ENCODE measurements at regions of chr15 and their contacts with region 1.

Region 1: DNA sequence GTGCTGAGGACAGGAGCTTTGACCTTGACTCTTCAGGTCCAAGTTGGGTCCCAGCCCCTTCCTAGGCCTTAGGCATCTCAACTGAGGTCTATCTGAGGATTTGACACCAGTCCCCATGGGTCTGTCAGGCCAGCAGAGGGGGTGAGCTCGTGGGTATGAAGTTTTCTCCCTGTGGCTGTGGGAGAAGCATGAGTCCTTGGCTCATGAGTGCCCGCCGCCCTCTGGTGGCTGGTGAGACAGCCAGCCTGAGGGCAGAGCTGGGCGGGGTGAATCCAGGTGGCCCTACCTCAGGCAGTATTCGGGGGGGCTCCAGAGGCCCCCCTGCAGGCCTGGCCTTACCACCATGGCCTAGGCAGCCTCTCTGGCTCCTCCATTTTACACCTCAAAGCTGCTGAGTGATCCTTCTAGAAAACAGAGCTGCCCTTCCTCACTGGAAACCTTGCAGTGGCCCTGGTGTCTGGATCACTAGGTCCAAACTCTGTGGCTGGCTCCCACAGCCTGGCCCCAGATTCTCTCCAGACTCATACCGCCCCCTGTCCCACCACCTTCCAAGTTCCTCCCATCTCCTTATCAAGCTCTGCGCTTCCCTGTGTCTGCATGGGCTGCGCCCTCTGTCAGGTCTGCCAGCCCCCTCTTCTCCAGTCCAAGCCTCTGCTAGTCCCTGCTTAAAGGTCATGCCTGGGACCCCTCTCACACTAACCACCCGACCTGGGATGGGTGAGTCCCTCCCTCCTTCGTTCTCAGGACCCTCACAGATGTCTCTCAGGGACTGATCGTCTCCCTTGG is 16.1 kb downstream of the SH2D7 start:
- DNase-seq: peak; percentile 69 to 92 (median 85)
- ATAC-seq: peak; percentile 79
- H3K4me3 ChIP-seq: no peak overlapping the region
- H3K4me3 Mint-ChIP-seq: no peak overlapping the region
- H3K27ac ChIP-seq: no peak overlapping the region
- H3K27ac Mint-ChIP-seq: no peak overlapping the region
- H3K4me1 ChIP-seq: peaks cover 34% of the 10 kb centered on the region
- H3K4me1 Mint-ChIP-seq: peaks cover 35% of the 10 kb centered on the region
- H3K27me3 ChIP-seq: no peaks in the 10 kb centered on the region
- H3K27me3 Mint-ChIP-seq: no peaks in the 10 kb centered on the region
- CTCF ChIP-seq: peak; percentile 80

Region 2: GRCh38 chr15:77907824-77908751 is 200.4 kb before region 1 on chr15:
- CTCF ChIA-PET with region 1: interaction called, 6 read pairs
- POLR2A ChIA-PET with region 1: no interaction called
- intact Hi-C with region 1: loop called in 1 of 2 experiments (anchors 1 kb)
- DNase-seq: peak in 7 of 9 experiments; percentile 28 to 59 (median 45)
- ATAC-seq: peak; percentile 40
- H3K4me3 ChIP-seq: no peak overlapping the region
- H3K4me3 Mint-ChIP-seq: no peak overlapping the region
- H3K27ac ChIP-seq: no peak overlapping the region
- H3K27ac Mint-ChIP-seq: no peak overlapping the region
- H3K4me1 ChIP-seq: no peaks in the 10 kb centered on the region
- H3K4me1 Mint-ChIP-seq: no peaks in the 10 kb centered on the region
- H3K27me3 ChIP-seq: no peaks in the 10 kb centered on the region
- H3K27me3 Mint-ChIP-seq: peaks cover 3% of the 10 kb centered on the region
- CTCF ChIP-seq: no peak

Region 3: DNA sequence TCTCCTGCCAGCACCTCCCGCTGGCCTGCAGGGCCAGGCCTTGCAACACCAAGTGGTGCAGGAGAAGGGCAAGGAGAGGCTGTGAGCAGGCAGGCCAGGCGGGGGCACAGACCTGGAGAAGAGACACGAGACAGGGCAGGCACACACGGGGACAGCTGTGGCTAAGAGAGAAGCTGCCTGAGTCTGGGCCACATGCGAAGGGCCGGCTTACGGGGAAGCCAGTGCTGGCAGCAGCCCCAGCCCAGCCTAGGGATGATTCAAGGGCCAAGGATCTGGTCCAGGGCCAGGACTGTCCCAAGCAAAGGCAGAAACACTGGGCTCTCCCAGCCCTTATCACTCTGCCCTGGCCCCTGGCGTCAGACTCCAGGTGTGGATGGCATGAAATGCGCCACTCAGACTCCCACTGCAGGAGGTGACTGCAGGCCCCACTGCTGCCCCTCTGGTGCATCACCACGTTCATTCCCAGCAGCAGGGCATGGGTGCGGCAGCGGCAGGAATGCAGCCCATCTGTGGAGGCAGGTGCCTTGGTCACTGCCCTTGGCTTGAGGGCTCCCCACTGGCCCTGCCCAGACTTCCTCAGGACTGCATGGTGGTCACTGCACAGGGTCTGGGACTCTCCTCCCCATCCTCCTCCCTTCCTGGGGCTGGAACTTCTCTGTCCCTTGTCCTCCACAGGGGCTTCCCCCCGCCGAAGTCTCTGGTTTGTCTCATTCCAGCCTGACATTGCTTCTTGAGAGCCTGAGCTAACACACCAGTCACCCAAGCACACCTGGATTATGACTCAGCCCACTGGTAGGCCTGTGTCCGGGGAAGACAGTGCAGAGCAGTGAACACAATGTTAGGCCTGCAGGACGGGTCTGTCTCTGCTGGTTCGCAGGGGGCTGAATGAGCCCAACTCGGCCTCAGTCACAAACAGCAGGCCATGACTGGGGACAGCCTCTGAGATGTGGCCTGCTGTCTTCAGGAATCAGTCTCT is 100.3 kb before region 1 on chr15:
- CTCF ChIA-PET with region 1: interaction called, 39 read pairs
- POLR2A ChIA-PET with region 1: interaction called, 3 read pairs
- intact Hi-C with region 1: no loop called
- DNase-seq: no peak
- ATAC-seq: no peak
- H3K4me3 ChIP-seq: no peak overlapping the region
- H3K4me3 Mint-ChIP-seq: no peak overlapping the region
- H3K27ac ChIP-seq: no peak overlapping the region
- H3K27ac Mint-ChIP-seq: no peak overlapping the region
- H3K4me1 ChIP-seq: no peaks in the 10 kb centered on the region
- H3K4me1 Mint-ChIP-seq: peaks cover 6% of the 10 kb centered on the region
- H3K27me3 ChIP-seq: no peaks in the 10 kb centered on the region
- H3K27me3 Mint-ChIP-seq: no peaks in the 10 kb centered on the region
- CTCF ChIP-seq: no peak

Region 4: GRCh38 chr15:78049691-78050440 is 58.6 kb before region 1 on chr15:
- CTCF ChIA-PET with region 1: interaction called, 18 read pairs
- POLR2A ChIA-PET with region 1: no interaction called
- intact Hi-C with region 1: loop called in 1 of 2 experiments (anchors 2 kb)
- DNase-seq: peak in 7 of 9 experiments; percentile 39 to 80 (median 59)
- ATAC-seq: peak; percentile 39
- H3K4me3 ChIP-seq: peak overlapping the region; percentile 12 to 20
- H3K4me3 Mint-ChIP-seq: peak overlapping the region; percentile 63
- H3K27ac ChIP-seq: peak overlapping the region; percentile 30 to 92
- H3K27ac Mint-ChIP-seq: peak overlapping the region; percentile 88
- H3K4me1 ChIP-seq: peaks cover 88% of the 10 kb centered on the region
- H3K4me1 Mint-ChIP-seq: peaks cover 97% of the 10 kb centered on the region
- H3K27me3 ChIP-seq: no peaks in the 10 kb centered on the region
- H3K27me3 Mint-ChIP-seq: no peaks in the 10 kb centered on the region
- CTCF ChIP-seq: no peak

Region 5: DNA sequence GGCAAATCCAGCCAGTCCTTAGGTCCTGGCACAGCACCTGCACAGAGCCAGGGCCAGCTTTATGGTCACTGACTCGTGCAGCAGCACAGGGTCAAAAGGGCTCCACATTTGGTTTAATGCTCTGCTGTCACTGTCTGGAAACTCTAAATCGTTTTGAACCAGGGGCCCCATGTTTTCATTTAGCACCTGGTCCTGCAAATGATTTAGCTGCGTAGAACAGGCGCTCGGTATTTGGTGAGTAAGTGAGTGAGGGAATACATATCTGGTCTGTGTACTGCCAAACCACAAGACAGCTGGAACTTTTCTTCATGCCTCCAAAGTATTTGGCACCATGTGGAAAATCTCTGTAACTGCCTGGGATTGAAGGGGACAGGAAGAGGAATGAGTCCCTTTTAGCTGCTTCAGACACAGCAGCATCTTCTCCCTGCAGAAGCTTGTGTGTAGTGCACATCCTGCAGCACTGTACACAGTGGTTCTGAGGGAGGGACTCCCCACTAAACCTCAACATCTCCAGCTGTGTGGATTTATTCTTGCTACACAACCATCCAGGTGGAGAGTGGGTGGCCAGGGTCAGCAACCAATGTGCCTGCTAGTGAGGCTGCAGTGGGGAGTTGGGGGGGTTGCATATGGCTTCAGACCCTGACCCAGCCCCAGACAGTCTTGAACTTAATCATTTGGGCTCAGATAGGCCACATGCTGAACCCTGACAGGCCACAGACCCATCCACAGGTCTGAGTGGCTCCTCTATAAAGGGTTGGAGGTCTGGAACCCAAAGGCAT is 15.1 kb before region 1 on chr15:
- CTCF ChIA-PET with region 1: interaction called, 19 read pairs
- POLR2A ChIA-PET with region 1: interaction called, 4 read pairs
- intact Hi-C with region 1: no loop called
- DNase-seq: no peak
- ATAC-seq: no peak
- H3K4me3 ChIP-seq: no peak overlapping the region
- H3K4me3 Mint-ChIP-seq: no peak overlapping the region
- H3K27ac ChIP-seq: no peak overlapping the region
- H3K27ac Mint-ChIP-seq: no peak overlapping the region
- H3K4me1 ChIP-seq: peaks cover 9% of the 10 kb centered on the region
- H3K4me1 Mint-ChIP-seq: peaks cover 7% of the 10 kb centered on the region
- H3K27me3 ChIP-seq: no peaks in the 10 kb centered on the region
- H3K27me3 Mint-ChIP-seq: no peaks in the 10 kb centered on the region
- CTCF ChIP-seq: no peak

Region 6: DNA sequence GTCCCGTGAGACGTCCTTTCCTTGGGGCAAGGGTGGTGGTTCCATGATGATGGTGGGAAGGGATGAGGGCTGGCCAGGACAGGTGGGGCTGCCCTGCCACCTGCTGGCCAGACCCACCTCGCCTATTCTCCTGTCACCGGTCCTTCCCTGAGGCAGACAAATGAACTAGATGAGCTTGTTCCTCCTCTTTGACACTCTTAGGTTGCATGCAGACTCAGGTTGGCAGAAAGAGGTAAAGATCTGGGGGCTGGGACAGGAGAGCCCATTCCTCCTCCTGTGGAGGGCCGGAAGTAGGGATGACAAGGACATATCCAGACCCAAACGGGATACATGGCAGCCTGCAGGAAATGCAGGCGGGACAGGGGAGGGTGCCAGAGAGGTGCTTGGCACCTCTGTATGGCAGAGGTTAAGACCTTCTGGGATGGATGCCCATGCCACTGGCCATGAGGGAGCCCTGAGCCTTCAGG is 87.3 kb after region 1 on chr15:
- CTCF ChIA-PET with region 1: interaction called, 333 read pairs
- POLR2A ChIA-PET with region 1: interaction called, 8 read pairs
- intact Hi-C with region 1: loop called (anchors 1 kb)
- DNase-seq: peak; percentile 18 to 74 (median 41)
- ATAC-seq: peak; percentile 87
- H3K4me3 ChIP-seq: no peak overlapping the region
- H3K4me3 Mint-ChIP-seq: no peak overlapping the region
- H3K27ac ChIP-seq: no peak overlapping the region
- H3K27ac Mint-ChIP-seq: no peak overlapping the region
- H3K4me1 ChIP-seq: no peaks in the 10 kb centered on the region
- H3K4me1 Mint-ChIP-seq: no peaks in the 10 kb centered on the region
- H3K27me3 ChIP-seq: no peaks in the 10 kb centered on the region
- H3K27me3 Mint-ChIP-seq: no peaks in the 10 kb centered on the region
- CTCF ChIP-seq: peak; percentile 72

Region 7: GRCh38 chr15:78481917-78482316 is 373.4 kb after region 1 on chr15:
- CTCF ChIA-PET with region 1: no interaction called
- POLR2A ChIA-PET with region 1: no interaction called
- intact Hi-C with region 1: no loop called
- DNase-seq: no peak
- ATAC-seq: no peak
- H3K4me3 ChIP-seq: no peak overlapping the region
- H3K4me3 Mint-ChIP-seq: no peak overlapping the region
- H3K27ac ChIP-seq: no peak overlapping the region
- H3K27ac Mint-ChIP-seq: no peak overlapping the region
- H3K4me1 ChIP-seq: no peaks in the 10 kb centered on the region
- H3K4me1 Mint-ChIP-seq: peaks cover 2% of the 10 kb centered on the region
- H3K27me3 ChIP-seq: no peaks in the 10 kb centered on the region
- H3K27me3 Mint-ChIP-seq: no peaks in the 10 kb centered on the region
- CTCF ChIP-seq: no peak

Region 8: GRCh38 chr15:78750566-78750965 is 642.1 kb after region 1 on chr15:
- CTCF ChIA-PET with region 1: no interaction called
- POLR2A ChIA-PET with region 1: no interaction called
- intact Hi-C with region 1: loop called in 1 of 2 experiments (anchors 5 kb)
- DNase-seq: no peak
- ATAC-seq: no peak
- H3K4me3 ChIP-seq: no peak overlapping the region
- H3K4me3 Mint-ChIP-seq: peak overlapping the region; percentile 19
- H3K27ac ChIP-seq: no peak overlapping the region
- H3K27ac Mint-ChIP-seq: no peak overlapping the region
- H3K4me1 ChIP-seq: peaks cover 8% of the 10 kb centered on the region
- H3K4me1 Mint-ChIP-seq: peaks cover 4% of the 10 kb centered on the region
- H3K27me3 ChIP-seq: no peaks in the 10 kb centered on the region
- H3K27me3 Mint-ChIP-seq: no peaks in the 10 kb centered on the region
- CTCF ChIP-seq: no peak